Activated CD8-positive, alpha-beta T cell treated with anti-CD3 and anti-CD28 coated beads, Interleukin-2, amount 10 ng/mL, durations not matched to agents 7 days and 5 days (primary cell): ENCODE measurements at regions of chr7 and their contacts with region 1.

Region 1: DNA sequence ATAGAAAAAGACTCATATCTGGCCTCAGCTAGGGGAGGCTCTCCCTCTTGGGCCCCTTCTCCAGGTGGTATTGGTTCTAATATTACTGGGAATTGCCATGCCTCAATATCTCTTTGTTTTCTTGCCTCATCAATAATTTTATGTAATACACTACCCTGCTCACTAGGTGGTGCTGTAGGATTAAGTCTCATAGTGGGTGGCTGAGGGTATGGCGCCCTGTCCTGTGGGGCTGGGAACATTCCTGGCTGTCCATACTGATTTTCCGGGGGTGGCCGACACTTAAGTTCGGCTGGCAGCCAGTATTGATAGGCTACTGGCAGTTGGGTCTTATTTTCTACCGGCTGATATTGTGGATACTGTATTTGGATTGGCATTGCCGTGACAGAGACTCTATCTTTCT is 9.0 kb upstream of the TAS2R3 start:
- DNase-seq: peak; percentile 24
- ATAC-seq: no peak
- H3K4me3 Mint-ChIP-seq: no peak overlapping the region
- H3K27ac Mint-ChIP-seq: no peak overlapping the region
- H3K4me1 Mint-ChIP-seq: no peaks in the 10 kb centered on the region
- H3K27me3 Mint-ChIP-seq: no peaks in the 10 kb centered on the region

Region 2: DNA sequence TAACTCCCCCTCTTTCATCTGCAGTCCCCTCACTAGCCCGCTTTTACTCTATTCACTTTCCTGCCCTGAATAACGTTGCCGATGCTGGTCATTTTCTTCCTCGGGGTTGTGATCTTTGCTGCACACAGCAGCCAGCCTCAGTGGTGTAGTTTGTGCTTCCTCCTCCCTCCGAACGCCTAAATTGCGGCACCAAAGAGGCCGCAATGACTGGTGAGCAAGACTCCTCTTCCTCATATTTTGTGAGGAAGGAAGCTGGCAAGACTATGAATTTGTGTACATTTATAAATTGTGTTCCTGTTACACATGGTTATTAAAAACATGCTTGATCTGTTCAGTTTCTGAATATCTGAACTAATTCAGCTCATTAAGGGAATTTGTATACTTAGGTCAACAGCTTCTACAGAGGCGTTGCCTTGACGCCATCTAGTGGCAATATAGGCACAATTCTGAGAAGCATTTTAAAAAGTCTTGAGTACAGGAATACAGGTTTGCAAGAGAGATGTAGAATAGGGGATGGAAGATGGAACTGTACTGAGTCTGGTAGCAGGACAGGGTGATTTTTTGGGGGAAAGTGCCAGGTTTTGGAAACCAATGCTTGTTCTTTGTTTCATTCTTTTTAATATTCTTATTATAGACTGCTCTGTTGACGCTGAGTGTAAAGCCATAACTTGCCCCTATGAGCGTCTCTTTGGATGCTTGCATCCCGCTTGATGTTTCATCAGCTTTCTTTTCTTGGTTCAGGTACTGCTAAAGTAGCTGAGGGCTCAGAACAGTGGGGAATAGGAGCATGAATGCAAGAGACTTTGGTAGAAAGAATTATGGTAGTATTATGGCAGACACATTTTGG is 31.0 kb after region 1 on chr7:
- CTCF ChIA-PET with region 1: interaction called, 14 read pairs
- POLR2A ChIA-PET with region 1: no interaction called
- DNase-seq: peak; percentile 45
- ATAC-seq: peak; percentile 61
- H3K4me3 Mint-ChIP-seq: no peak overlapping the region
- H3K27ac Mint-ChIP-seq: no peak overlapping the region
- H3K4me1 Mint-ChIP-seq: no peaks in the 10 kb centered on the region
- H3K27me3 Mint-ChIP-seq: no peaks in the 10 kb centered on the region